HepG2 (cell line): ENCODE measurements at regions of chr21 and their contacts with region 1.

Region 1: GRCh38 chr21:38965909-38966504 is 160.3 kb downstream of the ETS2 start:
- DNase-seq: peak; percentile 94
- ATAC-seq: peak; percentile 97
- H3K4me3 ChIP-seq: peak overlapping the region; percentile 2 to 19 (median 14); a peak in 4 of 6 replicates
- H3K27ac ChIP-seq: peak overlapping the region; percentile 74
- H3K4me1 ChIP-seq: peaks cover 58% of the 10 kb centered on the region
- H3K27me3 ChIP-seq: no peaks in the 10 kb centered on the region
- CTCF ChIP-seq: peak; percentile 15; the same call in 1 of the 2 replicates
- EP300 ChIP-seq: peak in 1 of 2 experiments; percentile 82; a peak in 2 of 4 replicates
- POLR2A ChIP-seq: peak; percentile 65 to 89
- RAD21 ChIP-seq: no peak

Region 2: DNA sequence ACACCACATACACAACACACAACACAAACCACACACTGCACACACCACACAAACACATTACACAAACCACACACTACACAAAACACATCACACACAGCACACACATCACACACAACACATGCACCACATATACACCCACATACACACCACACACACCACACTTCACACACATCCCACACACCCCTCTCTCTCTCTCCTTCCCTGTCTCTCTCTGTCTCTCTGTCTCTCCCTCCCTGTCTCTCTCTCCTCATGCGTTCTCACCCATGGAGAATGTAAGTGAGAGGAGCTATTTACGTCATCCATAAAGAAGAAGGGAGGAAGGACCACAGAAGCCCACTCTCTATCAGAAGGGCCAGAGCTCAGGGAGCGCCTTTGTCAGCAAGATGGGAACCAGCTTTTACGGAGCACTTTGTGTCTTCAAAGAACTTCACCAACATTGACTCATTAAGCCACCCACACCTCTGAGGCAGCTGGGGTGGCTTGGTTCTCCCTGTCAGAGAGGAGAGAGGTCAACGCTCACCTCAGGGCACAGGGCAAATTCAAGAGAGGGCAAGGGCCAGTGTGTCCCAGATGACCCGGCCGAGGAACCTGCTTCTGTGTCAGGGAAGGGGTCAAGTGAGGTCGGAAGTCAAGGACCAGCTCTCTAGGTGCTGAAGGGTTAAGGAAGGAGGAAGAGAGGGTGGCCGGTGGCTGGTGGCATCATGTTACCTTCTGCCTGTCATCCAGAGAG is 51.6 kb before region 1 on chr21:
- CTCF ChIA-PET with region 1: no interaction called
- POLR2A ChIA-PET with region 1: interaction called, 10 read pairs
- in situ Hi-C with region 1: no loop called
- intact Hi-C with region 1: loop called (anchors 5 kb)
- DNase-seq: no peak
- ATAC-seq: peak; percentile 8; the same call in 2 of the 3 replicates
- H3K4me3 ChIP-seq: peak overlapping the region in 1 of 3 experiments; percentile 11; a peak in 1 of 6 replicates
- H3K27ac ChIP-seq: peak overlapping the region; percentile 48
- H3K4me1 ChIP-seq: peaks cover 85% of the 10 kb centered on the region
- H3K27me3 ChIP-seq: no peaks in the 10 kb centered on the region; a peak in 1 of 5 replicates
- CTCF ChIP-seq: no peak
- EP300 ChIP-seq: peak in 1 of 2 experiments; percentile 34; a peak in 1 of 4 replicates
- POLR2A ChIP-seq: no peak
- RAD21 ChIP-seq: no peak

Region 3: DNA sequence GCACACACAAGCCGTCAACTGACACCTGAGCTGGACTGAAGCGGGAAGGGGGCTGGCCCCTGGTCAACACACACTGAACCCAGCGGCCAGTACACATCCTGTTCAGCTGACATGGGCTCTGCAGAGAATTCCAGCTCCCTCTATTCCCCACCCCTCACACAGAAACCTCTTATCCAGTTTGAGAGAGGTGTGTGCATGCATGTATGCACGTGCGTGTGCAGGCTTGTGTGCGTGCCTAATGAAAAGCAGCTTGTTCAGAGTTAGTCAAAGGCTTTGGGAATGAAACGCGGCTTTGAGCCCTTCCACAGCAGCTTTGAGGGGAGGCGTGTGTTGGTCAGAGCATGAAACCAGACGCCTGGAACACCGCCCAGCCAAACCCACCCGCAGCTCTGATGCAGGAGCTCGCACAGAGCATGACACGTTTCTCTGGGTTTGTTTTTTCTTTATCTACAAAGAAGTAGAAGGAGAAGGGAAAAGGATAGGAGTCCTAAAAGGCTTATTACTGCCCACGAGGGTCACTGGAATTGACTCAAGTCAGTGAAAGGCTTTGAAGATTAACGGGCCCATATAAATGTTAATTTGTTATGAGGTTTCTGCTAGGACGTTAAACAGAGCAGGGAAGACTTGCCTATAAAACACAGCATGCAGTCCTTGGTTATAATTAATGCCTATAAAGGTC is 23.9 kb after region 1 on chr21:
- CTCF ChIA-PET with region 1: no interaction called
- POLR2A ChIA-PET with region 1: interaction called, 14 read pairs
- in situ Hi-C with region 1: no loop called
- intact Hi-C with region 1: no loop called
- DNase-seq: peak; percentile 88
- ATAC-seq: peak; percentile 98
- H3K4me3 ChIP-seq: peak overlapping the region in 2 of 3 experiments; percentile 8 to 38; a peak in 3 of 6 replicates
- H3K27ac ChIP-seq: peak overlapping the region; percentile 77
- H3K4me1 ChIP-seq: peaks cover 100% of the 10 kb centered on the region
- H3K27me3 ChIP-seq: no peaks in the 10 kb centered on the region; a peak in 1 of 5 replicates
- CTCF ChIP-seq: 0 out of 2 replicates have a peak, but pooled peaks have one; percentile 7
- EP300 ChIP-seq: peak in 1 of 2 experiments; percentile 41; a peak in 1 of 4 replicates
- POLR2A ChIP-seq: no peak
- RAD21 ChIP-seq: no peak

Region 4: GRCh38 chr21:39022863-39023693 is 57.1 kb after region 1 on chr21:
- CTCF ChIA-PET with region 1: no interaction called
- POLR2A ChIA-PET with region 1: interaction called, 4 read pairs
- in situ Hi-C with region 1: no loop called
- intact Hi-C with region 1: loop called (anchors 2 kb)
- DNase-seq: peak; percentile 37
- ATAC-seq: peak; percentile 60
- H3K4me3 ChIP-seq: no peak overlapping the region
- H3K27ac ChIP-seq: no peak overlapping the region
- H3K4me1 ChIP-seq: peaks cover 64% of the 10 kb centered on the region
- H3K27me3 ChIP-seq: no peaks in the 10 kb centered on the region
- CTCF ChIP-seq: peak; percentile 46; the same call in 1 of the 2 replicates
- EP300 ChIP-seq: no peak
- POLR2A ChIP-seq: no peak
- RAD21 ChIP-seq: no peak